Panc1 (cell line): ENCODE measurements at regions of chr13 and their contacts with region 1.

Region 1: DNA sequence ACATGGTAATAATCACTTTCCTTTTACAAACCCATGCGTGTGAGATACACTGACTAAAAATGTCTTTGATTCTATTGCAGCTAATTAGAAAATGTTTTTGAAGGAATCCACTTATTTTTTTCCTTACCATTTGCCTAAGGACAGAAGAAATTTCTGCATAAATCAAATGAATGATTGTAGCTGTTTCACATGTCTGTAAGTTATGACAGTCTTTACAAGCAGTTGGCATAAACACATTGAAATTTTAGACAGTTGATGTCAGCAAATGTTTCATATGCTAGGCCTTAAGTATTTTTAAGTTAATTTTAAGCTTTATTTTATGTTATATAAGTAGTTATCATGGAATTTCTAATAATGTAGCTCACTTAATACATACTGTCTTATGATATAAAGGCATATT is 598.4 kb upstream of the SLITRK6 start:
- DNase-seq: no peak
- ATAC-seq: no peak
- H3K4me3 ChIP-seq: no peak overlapping the region
- H3K27ac ChIP-seq: no peak overlapping the region
- H3K4me1 ChIP-seq: no peaks in the 10 kb centered on the region
- H3K27me3 ChIP-seq: no peaks in the 10 kb centered on the region
- CTCF ChIP-seq: no peak

Region 2: DNA sequence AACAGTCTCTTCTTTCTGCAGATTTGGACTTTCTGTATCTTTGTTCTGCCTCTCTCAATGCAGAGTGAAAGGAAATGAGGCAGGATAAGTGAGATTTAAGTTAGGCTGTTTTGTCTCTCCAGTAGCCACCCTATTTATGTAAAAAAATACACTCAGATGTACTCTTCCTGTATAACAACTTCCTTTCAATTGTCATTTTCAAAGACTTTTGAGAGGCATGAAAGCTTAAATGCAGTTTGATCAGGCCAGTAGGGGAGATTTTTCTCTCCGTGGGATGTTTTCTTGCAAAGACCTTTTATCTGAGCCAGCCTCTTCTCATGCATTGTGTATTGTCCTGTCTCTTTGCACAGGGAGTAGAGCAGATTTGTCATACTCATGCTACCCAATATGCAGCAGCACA is 1440.3 kb after region 1 on chr13:
- CTCF ChIA-PET with region 1: no interaction called
- POLR2A ChIA-PET with region 1: interaction called, 10 read pairs
- in situ Hi-C with region 1: no loop called
- intact Hi-C with region 1: no loop called
- DNase-seq: no peak
- ATAC-seq: no peak
- H3K4me3 ChIP-seq: no peak overlapping the region
- H3K27ac ChIP-seq: no peak overlapping the region
- H3K4me1 ChIP-seq: no peaks in the 10 kb centered on the region
- H3K27me3 ChIP-seq: no peaks in the 10 kb centered on the region
- CTCF ChIP-seq: no peak